Endothelial cell of umbilical vein (primary cell): ENCODE measurements at regions of chr2 and their contacts with region 1.

Region 1: DNA sequence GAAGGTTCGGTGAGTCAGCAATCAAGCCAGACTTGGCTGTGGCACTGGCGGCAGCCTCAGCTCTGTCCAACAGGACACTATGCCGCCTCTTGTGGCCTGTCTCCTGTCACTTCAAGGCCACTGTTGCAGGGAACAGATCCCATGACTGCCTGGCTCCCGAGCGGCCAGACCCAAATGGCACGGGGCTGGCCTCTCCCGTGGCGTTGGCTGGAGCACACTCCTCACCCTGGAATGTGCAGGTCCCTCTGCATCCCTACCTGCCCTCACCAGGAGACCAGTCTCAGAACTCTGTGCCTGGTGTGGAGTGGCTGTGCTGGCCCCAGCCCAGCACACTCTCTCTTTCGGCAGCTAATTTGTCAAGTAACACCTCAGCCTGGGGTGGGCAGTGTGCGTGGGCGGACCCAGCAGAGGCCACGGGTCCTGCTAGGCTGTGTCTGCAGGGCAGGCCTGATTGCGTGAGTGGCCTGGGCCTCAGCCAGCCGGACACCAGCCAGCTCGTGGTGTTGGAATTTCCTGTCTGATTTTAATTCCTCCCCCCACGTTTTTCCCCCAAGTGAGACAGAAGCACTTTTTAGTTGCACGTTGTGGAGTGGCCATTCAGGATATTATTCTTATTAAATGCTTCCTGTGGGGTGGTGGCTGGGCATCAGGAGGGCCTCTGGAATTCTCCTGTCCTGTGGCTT is 179.3 kb downstream of the GLI2 start:
- DNase-seq: peak; percentile 92
- H3K4me3 ChIP-seq: no peak overlapping the region
- H3K27ac ChIP-seq: peak overlapping the region; percentile 26
- H3K4me1 ChIP-seq: peaks cover 18% of the 10 kb centered on the region
- H3K27me3 ChIP-seq: peaks cover 46 to 63% of the 10 kb centered on the region in 2 experiments
- CTCF ChIP-seq: peak in 1 of 2 donors; percentile 1
- POLR2A ChIP-seq: peak; percentile 29

Region 2: GRCh38 chr2:120503793-120504571 is 411.0 kb before region 1 on chr2:
- CTCF ChIA-PET with region 1: no interaction called
- POLR2A ChIA-PET with region 1: no interaction called
- dilution Hi-C with region 1: no loop called
- intact Hi-C with region 1: loop called (anchors 1 kb)
- DNase-seq: peak; percentile 29
- H3K4me3 ChIP-seq: no peak overlapping the region
- H3K27ac ChIP-seq: no peak overlapping the region
- H3K4me1 ChIP-seq: peaks cover 8% of the 10 kb centered on the region
- H3K27me3 ChIP-seq: peaks cover 13 to 38% of the 10 kb centered on the region in 2 experiments
- CTCF ChIP-seq: no peak
- POLR2A ChIP-seq: no peak

Region 3: GRCh38 chr2:120722568-120723421 is 192.2 kb before region 1 on chr2:
- CTCF ChIA-PET with region 1: no interaction called
- POLR2A ChIA-PET with region 1: no interaction called
- dilution Hi-C with region 1: no loop called
- intact Hi-C with region 1: loop called (anchors 1 kb)
- DNase-seq: peak; percentile 68
- H3K4me3 ChIP-seq: no peak overlapping the region
- H3K27ac ChIP-seq: peak overlapping the region; percentile 69
- H3K4me1 ChIP-seq: peaks cover 15% of the 10 kb centered on the region
- H3K27me3 ChIP-seq: peaks cover 3 to 6% of the 10 kb centered on the region in 2 experiments
- CTCF ChIP-seq: no peak
- POLR2A ChIP-seq: no peak

Region 4: DNA sequence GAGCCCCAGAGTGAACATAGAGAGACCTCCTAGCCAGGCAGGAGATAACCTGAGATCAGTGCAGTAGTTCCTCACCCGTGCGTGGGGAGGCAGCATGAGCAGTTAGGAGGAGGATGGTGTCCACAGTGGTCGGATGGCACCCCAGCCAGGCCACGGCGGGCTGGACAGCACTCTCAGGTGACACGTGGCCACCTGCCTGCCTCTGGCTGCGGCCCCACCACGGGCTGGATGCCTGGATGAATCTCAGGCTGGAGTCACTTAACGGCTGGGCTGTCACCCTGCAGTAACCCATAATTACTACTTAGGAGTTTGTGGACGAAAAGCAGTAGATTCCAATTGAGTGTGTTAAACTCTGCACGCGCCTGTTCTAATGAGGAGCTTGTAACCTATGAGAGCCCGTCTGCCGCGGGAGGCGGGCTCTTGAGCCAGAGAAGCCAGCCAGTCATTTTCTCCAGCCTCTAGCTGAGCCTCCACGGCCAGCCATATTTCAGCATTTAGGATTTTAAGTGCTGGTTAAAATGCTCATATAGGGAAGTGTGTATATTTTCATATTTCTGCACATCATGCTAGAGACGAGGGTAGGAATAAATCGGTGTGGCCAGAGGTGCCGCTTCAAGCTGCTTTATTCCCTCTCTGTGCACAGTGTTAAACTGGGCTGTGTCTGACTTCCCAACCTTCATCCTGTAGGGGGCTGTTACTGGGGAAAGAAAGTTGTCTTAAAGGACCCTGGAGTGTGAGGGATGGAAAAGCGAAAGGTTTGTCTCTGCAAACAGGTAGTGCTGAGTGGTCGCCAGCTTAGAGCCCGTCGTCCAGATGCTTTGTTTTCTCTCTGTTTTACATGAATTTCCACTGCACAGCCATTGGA is 35.3 kb before region 1 on chr2:
- CTCF ChIA-PET with region 1: no interaction called
- POLR2A ChIA-PET with region 1: no interaction called
- dilution Hi-C with region 1: no loop called
- intact Hi-C with region 1: no loop called
- DNase-seq: no peak
- H3K4me3 ChIP-seq: no peak overlapping the region
- H3K27ac ChIP-seq: no peak overlapping the region
- H3K4me1 ChIP-seq: no peaks in the 10 kb centered on the region
- H3K27me3 ChIP-seq: peaks cover 4% of the 10 kb centered on the region in 2 experiments
- CTCF ChIP-seq: no peak
- POLR2A ChIP-seq: no peak

Region 5: DNA sequence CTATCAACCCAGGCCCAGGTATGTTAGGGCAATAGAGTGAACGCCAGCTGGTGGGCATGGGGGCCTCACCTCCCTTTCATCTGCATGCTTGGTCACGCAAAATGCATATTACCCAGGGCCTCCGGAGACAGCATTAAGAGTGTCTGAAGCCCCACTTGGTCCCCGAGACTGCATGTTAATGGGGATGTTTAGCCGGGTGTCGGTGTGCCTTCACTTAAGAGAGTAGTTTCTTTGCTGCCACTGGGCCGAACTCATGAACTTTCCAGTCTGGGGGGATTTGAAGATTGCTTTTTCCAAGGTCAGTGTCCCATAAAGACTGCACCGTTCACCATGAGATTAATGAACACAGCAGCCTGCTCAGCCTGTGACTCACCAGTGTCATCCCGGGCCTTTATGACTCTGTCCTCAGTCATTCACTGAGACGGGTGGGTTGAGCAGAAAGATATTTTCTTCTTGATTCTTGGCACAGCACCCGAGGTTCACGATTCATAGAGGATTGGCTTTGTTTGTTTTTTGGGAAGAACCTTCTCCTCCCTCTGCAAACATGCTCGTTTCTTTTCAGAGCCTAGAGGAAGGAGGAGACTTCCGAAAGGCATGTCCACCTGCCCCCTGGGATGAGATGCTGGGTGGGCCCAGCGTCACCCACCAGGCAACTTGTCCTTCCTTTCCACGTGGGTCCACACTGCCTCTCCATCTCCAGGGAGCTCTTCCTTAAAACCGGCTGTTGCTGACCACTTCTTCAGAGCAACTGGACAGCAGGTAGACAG is 19.8 kb after region 1 on chr2:
- CTCF ChIA-PET with region 1: no interaction called
- POLR2A ChIA-PET with region 1: no interaction called
- dilution Hi-C with region 1: no loop called
- intact Hi-C with region 1: loop called (anchors 2 kb)
- DNase-seq: no peak
- H3K4me3 ChIP-seq: no peak overlapping the region
- H3K27ac ChIP-seq: no peak overlapping the region
- H3K4me1 ChIP-seq: no peaks in the 10 kb centered on the region
- H3K27me3 ChIP-seq: peaks cover 6 to 24% of the 10 kb centered on the region in 2 experiments
- CTCF ChIP-seq: no peak
- POLR2A ChIP-seq: no peak

Region 6: DNA sequence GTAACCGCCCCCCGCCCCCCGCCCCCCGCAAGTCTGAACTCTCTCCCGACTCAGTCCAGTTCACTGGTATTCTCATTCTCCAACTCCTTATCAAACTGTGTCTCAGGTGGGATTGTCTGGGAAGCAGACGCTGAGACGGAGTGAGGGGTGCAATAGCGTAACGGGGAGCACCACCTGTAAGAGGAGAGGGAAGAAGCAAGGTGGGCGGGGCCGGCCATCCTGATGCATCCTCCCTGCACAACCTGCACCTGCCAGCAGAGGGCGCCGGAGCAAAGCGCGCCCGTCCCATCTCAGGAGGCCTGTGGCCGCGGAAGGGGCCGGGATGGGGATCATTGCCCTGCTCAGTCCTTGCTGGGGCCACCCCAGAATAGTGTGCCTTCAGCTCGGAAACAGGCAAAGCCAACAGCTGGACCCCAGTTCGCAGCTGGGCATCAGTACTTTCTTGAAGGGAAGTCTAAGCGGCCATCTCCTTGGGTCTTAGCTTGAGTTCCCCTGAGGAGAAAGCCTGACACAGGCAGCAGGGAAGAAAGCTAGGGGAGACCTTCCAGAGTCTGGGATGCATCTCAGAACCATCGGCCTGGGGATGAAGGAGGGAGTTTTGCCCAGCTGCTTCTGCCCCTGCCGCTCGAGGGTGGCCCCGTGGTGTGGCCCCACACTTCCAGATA is 162.0 kb after region 1 on chr2:
- CTCF ChIA-PET with region 1: no interaction called
- POLR2A ChIA-PET with region 1: interaction called, 3 read pairs
- dilution Hi-C with region 1: no loop called
- intact Hi-C with region 1: loop called (anchors 2 kb)
- DNase-seq: peak; percentile 33
- H3K4me3 ChIP-seq: no peak overlapping the region
- H3K27ac ChIP-seq: no peak overlapping the region
- H3K4me1 ChIP-seq: peaks cover 4% of the 10 kb centered on the region
- H3K27me3 ChIP-seq: peaks cover 9 to 10% of the 10 kb centered on the region in 2 experiments
- CTCF ChIP-seq: peak; percentile 97
- POLR2A ChIP-seq: no peak